ENCODE measurements at regions of chr18 and their contacts with region 1.

Region 1: DNA sequence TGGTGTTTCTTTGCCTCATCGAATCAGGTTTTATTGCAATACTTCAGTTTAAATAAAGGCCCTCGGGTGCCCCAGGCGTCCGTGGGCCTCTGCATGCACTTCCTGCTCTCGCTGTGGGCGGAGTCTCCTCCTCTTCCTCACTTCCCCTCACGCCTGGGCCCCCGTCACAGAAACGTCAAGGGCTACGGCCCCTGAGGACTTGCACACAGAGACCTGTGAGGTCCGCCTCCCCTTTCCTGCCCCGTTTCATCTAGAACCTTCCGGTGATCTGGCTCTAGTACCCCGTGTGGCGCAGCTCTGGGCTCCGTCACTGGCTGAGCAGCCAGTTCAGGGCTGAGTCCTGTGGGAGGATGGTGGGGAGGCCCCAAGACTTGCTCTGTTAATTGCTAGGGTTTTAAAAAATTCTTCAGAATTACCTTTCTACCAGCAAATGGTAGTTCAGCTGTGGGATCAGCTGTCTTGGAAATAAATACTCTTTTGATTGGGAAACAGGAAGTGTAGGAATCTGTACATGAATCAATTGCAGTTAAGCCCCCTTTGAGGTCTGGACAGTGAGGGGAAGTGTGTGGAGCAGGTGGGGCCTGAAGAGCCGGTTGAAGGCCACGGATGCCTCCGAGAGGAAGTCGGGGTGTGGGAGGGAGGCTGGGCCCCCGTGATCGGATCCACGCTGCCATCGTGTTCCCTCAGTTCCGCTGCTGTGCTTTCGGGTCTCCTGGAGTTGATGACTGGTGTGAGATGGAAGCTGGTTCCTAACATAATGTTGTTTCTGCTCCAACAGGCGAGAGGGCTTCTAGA is 10.2 kb downstream of the NFATC1 start:
- H3K4me3 Mint-ChIP-seq: peak overlapping the region; percentile 65
- H3K27ac Mint-ChIP-seq: peak overlapping the region; percentile 95
- H3K4me1 Mint-ChIP-seq: peaks cover 62% of the 10 kb centered on the region
- H3K27me3 Mint-ChIP-seq: peaks cover 2% of the 10 kb centered on the region

Region 2: GRCh38 chr18:79476031-79476917 is 70.3 kb after region 1 on chr18:
- intact Hi-C with region 1: no loop called
- H3K4me3 Mint-ChIP-seq: no peak overlapping the region
- H3K27ac Mint-ChIP-seq: no peak overlapping the region
- H3K4me1 Mint-ChIP-seq: no peaks in the 10 kb centered on the region
- H3K27me3 Mint-ChIP-seq: no peaks in the 10 kb centered on the region

Region 3: DNA sequence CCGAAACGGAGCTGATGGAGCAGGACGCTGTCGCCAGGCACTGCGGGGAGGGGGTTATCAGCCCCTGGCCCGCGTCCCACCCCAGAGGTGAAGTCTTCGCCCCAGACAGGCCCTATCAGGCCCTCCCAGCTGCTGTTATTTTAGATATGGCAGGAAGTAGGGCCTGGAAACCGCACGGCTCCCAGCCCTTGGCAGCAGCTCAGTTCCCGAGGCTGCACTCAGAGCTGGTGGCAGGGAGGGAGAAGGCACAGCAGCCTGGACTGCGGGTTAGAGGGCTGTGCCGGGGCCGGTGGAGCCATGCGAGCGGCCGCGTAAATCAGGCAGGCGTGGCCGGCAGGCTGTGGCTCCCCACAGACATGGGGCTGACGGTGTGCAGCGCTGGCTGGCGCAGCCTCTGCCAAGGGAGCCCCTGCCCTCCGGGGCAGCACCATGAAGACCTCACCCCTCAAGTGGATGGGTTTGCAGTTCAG is 101.1 kb after region 1 on chr18:
- intact Hi-C with region 1: loop called (anchors 5 kb)
- H3K4me3 Mint-ChIP-seq: peak overlapping the region; percentile 73
- H3K27ac Mint-ChIP-seq: peak overlapping the region; percentile 78
- H3K4me1 Mint-ChIP-seq: peaks cover 63% of the 10 kb centered on the region
- H3K27me3 Mint-ChIP-seq: peaks cover 18% of the 10 kb centered on the region